Activated CD8-positive, alpha-beta T cell treated with anti-CD3 and anti-CD28 coated beads for 36 hours (primary cell): ENCODE measurements at regions of chr9 and their contacts with region 1.

Region 1: DNA sequence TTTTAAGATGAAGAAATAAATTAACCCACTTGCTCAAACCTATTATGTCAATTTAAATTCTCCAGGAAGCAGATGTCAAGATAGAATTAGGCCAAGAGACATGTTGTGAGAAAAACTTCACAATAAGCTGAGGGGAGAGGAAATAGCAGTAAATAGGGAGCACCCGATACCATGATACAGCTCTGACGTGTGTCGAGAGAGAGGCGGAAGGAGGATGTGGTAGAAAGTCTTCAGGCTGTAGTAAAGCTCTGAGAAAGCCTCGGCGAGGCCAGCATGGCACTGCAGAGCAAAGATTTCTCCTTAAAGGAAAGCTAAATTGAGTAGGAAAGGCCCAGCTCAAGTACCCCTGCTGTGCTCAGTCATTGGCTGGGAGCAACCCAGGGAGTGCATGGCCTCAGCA is 6.0 kb upstream of the PUM3 start:
- DNase-seq: peak; percentile 6
- ATAC-seq: peak; percentile 67
- H3K4me3 Mint-ChIP-seq: no peak overlapping the region
- H3K27ac Mint-ChIP-seq: peak overlapping the region; percentile 31
- H3K4me1 Mint-ChIP-seq: peaks cover 9% of the 10 kb centered on the region
- H3K27me3 Mint-ChIP-seq: peaks cover 7% of the 10 kb centered on the region
- CTCF ChIP-seq: no peak

Region 2: DNA sequence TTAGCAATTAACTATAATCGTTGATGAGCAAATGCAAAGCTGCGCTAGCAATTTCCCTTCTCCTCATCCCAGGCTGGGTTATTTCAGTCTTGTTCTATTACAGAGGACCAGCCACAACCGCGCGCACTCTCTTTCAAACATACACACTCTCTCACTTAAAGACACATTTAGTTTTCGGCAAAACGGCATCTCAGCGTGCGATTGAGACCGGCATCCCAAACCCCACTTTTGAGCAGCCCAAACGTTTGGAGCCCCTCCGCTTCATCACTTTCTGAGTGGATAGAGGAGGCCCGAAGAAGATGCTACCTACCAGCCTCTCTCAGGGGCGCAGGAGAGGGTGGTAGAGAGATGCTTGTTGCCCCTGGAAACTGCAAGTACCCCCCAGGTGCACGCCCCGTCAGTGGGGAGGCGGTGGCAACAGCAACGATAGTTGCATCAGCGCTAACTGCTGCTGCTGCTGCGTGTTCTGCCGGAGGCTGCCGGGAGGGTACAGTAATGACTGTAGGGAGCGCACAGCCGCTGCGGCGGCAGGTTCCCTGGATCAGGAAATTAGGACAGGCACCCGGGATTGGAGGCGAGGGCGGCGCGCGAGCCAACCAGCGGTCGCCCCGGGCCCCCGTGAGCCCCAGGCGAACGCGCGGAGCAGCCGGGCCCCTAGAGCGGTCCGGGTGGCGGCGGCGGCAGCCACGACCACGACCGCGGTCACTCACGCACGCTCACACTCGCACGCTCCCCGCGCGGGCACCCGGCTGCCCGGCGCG is 228.8 kb before region 1 on chr9:
- CTCF ChIA-PET with region 1: no interaction called
- POLR2A ChIA-PET with region 1: no interaction called
- intact Hi-C with region 1: loop called (anchors 10 kb)
- DNase-seq: peak; percentile 78
- ATAC-seq: peak; percentile 70
- H3K4me3 Mint-ChIP-seq: peak overlapping the region; percentile 82
- H3K27ac Mint-ChIP-seq: peak overlapping the region; percentile 81
- H3K4me1 Mint-ChIP-seq: peaks cover 8% of the 10 kb centered on the region
- H3K27me3 Mint-ChIP-seq: peaks cover 58% of the 10 kb centered on the region
- CTCF ChIP-seq: no peak

Region 3: GRCh38 chr9:3008091-3008490 is 158.2 kb after region 1 on chr9:
- CTCF ChIA-PET with region 1: no interaction called
- POLR2A ChIA-PET with region 1: no interaction called
- intact Hi-C with region 1: no loop called
- DNase-seq: no peak
- ATAC-seq: no peak
- H3K4me3 Mint-ChIP-seq: no peak overlapping the region
- H3K27ac Mint-ChIP-seq: no peak overlapping the region
- H3K4me1 Mint-ChIP-seq: no peaks in the 10 kb centered on the region
- H3K27me3 Mint-ChIP-seq: peaks cover 9% of the 10 kb centered on the region
- CTCF ChIP-seq: no peak